KBM-7 (cell line): ENCODE measurements at regions of chr11 and their contacts with region 1.

Region 1: DNA sequence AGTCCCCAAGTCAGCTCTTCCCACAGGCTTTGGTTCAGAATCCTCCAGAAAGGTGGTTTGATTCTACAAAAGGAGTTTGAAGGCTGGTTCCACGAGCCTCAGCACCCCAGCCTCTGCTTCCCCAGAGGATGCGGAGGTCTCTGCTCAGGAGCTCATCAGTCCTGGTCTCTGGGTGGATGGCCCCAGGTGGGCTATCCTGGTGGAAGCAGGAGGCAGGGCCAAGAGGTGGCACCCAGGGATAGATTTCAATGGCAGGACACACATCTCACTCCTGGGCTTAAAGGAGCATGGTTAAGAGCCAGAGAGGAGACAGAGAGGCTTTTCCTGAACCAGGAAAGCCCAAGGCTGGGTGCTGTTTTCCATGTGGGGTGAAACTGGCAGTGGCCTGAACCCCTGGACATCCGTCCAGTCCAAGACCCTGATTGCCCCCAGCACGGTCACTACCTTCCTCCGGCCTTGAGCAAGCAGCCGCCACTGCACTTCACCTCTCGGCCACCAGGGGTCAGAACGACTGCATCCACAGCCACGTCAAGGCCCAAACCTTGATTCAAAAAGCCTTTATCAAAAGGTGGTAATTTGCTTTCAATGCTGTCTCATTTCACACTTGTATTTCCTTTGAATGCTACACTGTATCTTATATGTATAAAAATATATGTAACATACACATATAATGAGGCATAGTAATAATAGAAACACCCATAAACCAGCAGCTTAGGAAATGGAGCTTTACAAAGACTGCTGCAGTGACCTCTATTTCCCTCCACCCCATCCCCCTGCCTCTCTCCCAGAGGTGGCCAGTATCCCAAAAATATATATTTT is 19.3 kb upstream of the FXYD2 start:
- DNase-seq: peak; percentile 72

Region 2: DNA sequence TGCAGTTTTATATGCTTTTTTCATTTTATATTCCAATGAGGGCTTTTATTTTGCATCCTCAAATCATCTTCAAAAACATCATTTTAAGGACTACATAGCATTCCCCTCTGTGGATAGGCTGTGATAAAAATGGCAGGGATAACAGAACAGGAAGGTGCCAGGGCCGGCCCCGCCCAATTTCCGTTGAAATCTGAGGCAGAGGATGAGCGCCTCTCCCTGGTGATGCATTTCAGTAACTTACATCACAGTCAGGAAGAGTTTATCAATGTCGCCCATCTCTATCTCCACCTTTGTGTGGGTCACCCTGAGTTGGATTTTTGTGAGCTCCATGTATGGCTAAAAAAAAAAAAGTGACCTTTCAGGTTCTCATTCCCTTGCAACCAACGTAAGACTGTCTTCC is 248.4 kb before region 1 on chr11:
- in situ Hi-C with region 1: no loop called
- DNase-seq: no peak

Region 3: GRCh38 chr11:118051611-118052461 is 208.0 kb after region 1 on chr11:
- in situ Hi-C with region 1: loop called (anchors 25 kb)
- DNase-seq: no peak